Esophagus muscularis mucosa (tissue), 4 donors: ENCODE measurements at regions of chr5 and their contacts with region 1.

Region 1: DNA sequence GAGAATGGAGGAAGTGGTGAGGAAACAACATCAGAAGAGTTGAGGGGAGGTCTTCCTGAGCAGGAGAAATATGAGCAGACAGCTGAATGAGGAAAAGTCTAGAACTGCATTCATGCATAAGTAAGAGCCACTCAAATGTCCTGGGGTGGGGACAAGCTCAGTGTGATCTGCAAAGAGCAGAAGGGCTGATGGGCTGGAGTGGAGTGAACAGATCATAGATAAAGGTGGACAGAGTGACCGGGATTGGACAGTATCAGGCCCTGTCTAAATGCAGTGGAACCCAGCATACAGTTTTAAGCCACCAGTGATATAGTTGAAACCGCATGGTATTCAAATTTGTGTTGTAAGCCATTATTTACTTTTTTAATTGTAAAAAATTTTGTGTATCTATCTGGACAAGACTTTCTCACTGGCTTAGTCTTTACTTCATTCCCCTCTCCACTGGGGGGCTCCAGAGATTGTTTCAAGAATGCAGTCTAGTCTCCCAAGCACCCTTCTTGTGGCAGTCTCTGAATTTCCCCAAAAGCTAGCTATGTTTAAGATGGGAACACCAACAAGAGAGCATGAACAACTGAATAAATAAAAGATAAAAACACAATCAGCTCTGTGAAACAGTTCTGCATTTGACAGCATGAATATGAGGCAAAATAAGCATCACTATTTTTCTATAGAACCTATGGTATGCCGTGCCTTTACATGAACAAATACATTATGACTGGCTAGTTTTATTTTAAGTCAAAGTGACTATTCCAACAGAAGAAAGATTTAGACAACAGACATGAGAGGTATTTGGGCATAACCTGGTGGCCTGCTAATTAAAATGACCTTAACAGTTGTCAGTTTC is 10.7 kb upstream of the STK32A start:
- DNase-seq: no peak
- H3K4me3 ChIP-seq: no peak overlapping the region
- H3K27ac ChIP-seq: no peak overlapping the region
- H3K4me1 ChIP-seq: no peaks in the 10 kb centered on the region
- H3K27me3 ChIP-seq: no peaks in the 10 kb centered on the region
- CTCF ChIP-seq: peak; percentile 67 to 73 (median 72)
- EP300 ChIP-seq: no peak
- POLR2A ChIP-seq: no peak

Region 2: GRCh38 chr5:147369742-147370374 is 145.7 kb after region 1 on chr5:
- intact Hi-C with region 1: loop called (anchors 5 kb)
- DNase-seq: no peak
- H3K4me3 ChIP-seq: no peak overlapping the region
- H3K27ac ChIP-seq: no peak overlapping the region
- H3K4me1 ChIP-seq: no peaks in the 10 kb centered on the region
- H3K27me3 ChIP-seq: no peaks in the 10 kb centered on the region
- CTCF ChIP-seq: peak; percentile 51 to 64 (median 63)
- EP300 ChIP-seq: no peak
- POLR2A ChIP-seq: no peak

Region 3: GRCh38 chr5:147464211-147464610 is 240.0 kb after region 1 on chr5:
- intact Hi-C with region 1: loop called (anchors 10 kb)
- DNase-seq: no peak
- H3K4me3 ChIP-seq: no peak overlapping the region
- H3K27ac ChIP-seq: peak overlapping the region in 1 of 4 donors; percentile 17
- H3K4me1 ChIP-seq: peaks cover 0 to 51% (median 39%) of the 10 kb centered on the region in 4 donors
- H3K27me3 ChIP-seq: no peaks in the 10 kb centered on the region
- CTCF ChIP-seq: peak; percentile 29 to 54 (median 32)
- EP300 ChIP-seq: no peak
- POLR2A ChIP-seq: no peak

Region 4: GRCh38 chr5:147558826-147559225 is 334.7 kb after region 1 on chr5:
- intact Hi-C with region 1: loop called (anchors 5 kb)
- DNase-seq: no peak
- H3K4me3 ChIP-seq: no peak overlapping the region
- H3K27ac ChIP-seq: peak overlapping the region; percentile 62 to 87 (median 65)
- H3K4me1 ChIP-seq: peaks cover 12 to 41% (median 37%) of the 10 kb centered on the region in 4 donors
- H3K27me3 ChIP-seq: no peaks in the 10 kb centered on the region
- CTCF ChIP-seq: peak; percentile 79 to 82 (median 82)
- EP300 ChIP-seq: no peak
- POLR2A ChIP-seq: no peak

Region 5: DNA sequence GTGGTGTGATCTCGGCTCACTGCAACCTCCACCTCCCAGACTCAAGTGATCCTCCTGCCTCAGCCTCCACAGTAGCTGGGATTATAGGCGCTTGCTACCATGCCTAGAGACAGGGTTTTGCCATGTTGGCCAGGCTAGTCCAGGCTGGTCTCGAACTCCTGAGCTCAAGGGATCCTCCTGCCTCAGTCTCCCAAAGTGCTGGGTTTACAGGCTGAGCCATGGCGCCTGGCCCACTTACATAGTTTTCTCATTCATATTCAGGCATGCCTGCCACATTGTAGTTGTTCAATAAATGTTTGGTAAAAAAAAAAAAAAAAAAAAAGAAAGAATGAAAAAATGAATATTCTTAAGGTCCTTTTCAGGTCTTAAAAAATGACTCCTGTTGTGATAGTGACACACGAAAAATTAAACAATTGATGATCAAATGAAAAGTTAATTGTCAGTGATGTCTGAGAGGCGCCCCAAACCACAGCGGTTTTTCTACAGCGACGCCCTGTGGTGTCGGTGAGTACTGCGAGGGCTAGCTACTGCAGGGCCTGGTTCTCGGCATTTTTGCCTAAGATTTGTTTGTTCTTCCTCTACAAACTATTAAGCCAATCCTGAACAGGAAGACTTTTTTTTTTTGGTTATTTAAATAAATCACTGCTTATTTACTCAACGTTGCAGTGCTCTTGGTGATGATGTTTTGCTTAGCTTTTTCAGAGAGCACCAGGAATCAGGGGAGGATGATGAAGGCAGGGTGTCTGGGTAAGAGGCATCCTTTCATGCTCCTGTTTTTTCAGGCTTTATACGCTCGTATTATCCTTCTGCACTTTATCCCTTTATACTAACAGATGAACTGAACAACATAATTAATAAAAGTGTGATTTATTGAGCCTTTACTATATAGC is 352.7 kb after region 1 on chr5:
- intact Hi-C with region 1: loop called (anchors 5 kb)
- DNase-seq: peak; percentile 92
- H3K4me3 ChIP-seq: no peak overlapping the region
- H3K27ac ChIP-seq: no peak overlapping the region
- H3K4me1 ChIP-seq: peaks cover 0 to 12% (median 2%) of the 10 kb centered on the region in 4 donors
- H3K27me3 ChIP-seq: no peaks in the 10 kb centered on the region
- CTCF ChIP-seq: peak in 2 of 3 experiments; percentile 86 to 89
- EP300 ChIP-seq: no peak
- POLR2A ChIP-seq: no peak